A549 (cell line): ENCODE measurements at regions of chr12 and their contacts with region 1.

Region 1: DNA sequence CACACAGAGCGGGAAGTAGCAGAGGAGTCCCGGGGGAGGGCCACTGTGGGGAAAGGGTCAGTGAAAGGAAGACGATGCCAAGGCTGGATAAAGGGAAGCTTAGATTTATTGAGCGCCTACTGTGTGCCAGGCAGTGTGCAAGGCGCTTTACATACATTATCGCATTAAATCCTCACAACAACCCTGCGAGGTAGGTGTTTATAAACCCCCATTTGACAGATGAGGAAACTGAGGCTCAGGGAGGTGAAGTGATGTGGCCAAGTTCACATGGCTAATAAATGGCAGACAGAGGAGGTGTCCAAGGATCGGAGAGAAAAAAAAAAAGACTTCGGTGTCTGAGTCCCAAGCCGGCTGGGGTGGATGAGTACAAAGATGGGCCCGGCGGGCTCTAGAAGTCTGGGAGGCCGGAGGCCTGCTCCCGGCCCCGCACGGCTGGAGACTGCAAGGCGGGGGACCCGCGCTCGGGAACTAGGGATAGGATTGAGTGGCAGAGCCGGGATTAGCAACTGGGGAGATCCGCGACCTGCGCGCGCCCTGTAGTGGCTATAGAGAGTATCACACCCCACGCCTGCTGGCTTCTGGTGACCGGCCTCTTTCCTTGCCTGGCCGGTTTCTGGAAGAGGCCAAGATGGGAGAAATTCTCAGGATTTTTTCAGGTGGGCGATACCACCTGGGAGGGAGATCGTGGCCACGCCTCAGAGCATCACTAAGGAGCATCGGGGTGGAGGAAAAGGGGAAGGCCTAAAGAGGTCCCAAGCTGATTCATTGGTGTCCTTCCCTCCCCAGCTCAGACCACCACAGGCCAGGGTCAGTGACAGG is 3.9 kb downstream of the DDN start:
- DNase-seq: peak; percentile 89 to 99
- ATAC-seq: peak; percentile 65 to 76
- H3K4me3 ChIP-seq: peak overlapping the region; percentile 32
- H3K27ac ChIP-seq: peak overlapping the region; percentile 32 to 56; a peak in 3 of 6 replicates
- H3K4me1 ChIP-seq: peaks cover 18% of the 10 kb centered on the region
- CTCF ChIP-seq: peak; percentile 66
- EP300 ChIP-seq: no peak
- POLR2A ChIP-seq: no peak
- RAD21 ChIP-seq: peak; percentile 81 to 83

Region 2: DNA sequence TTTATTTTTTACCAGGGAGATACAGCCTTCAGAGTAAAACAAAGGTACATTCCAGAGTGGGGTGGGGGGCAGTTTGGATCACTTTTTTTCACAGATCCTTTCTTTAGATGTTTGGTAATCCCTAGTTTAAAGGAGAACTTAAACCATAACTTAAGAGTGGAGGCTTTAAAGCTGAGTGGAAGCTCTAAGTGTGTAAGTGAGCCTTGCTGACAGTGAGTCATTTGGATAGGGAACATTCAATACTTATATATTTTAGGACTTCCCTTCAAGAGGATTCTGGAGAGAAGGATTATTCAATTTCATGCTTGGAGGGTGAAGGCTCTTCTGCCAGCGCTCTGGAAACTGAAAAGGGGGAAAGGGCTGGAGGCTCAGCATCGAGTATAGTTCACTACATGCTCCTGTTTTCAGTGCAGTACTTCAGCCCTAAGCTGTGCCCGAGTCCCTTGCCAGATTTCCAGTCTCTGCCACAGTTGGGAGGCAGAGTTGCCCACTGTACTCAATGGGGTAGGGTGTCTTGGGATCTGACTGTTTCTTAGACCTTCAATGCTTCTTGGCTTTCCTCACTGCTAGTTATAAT is 14.9 kb after region 1 on chr12:
- CTCF ChIA-PET with region 1: interaction called, 146 read pairs
- POLR2A ChIA-PET with region 1: no interaction called
- DNase-seq: no peak
- ATAC-seq: peak in 1 of 2 experiments; percentile 16; a peak in 1 of 6 replicates
- H3K4me3 ChIP-seq: no peak overlapping the region
- H3K27ac ChIP-seq: no peak overlapping the region
- H3K4me1 ChIP-seq: peaks cover 15% of the 10 kb centered on the region
- CTCF ChIP-seq: no peak
- EP300 ChIP-seq: no peak
- POLR2A ChIP-seq: no peak
- RAD21 ChIP-seq: no peak